Common myeloid progenitor, CD34-positive (primary cell): ENCODE measurements at regions of chr2 and their contacts with region 1.

Region 1: GRCh38 chr2:72579591-72580180 is 246.1 kb downstream of the EXOC6B start:
- DNase-seq: peak; percentile 50 to 73 (median 72)
- H3K4me3 ChIP-seq: no peak overlapping the region
- H3K27ac ChIP-seq: no peak overlapping the region
- H3K4me1 ChIP-seq: peaks cover 0 to 4% (median 4%) of the 10 kb centered on the region in 4 experiments
- H3K27me3 ChIP-seq: no peaks in the 10 kb centered on the region

Region 2: GRCh38 chr2:71923887-71924533 is 655.7 kb before region 1 on chr2:
- CTCF ChIA-PET with region 1: interaction called, 48 read pairs
- POLR2A ChIA-PET with region 1: no interaction called
- DNase-seq: peak; percentile 52 to 76 (median 70)
- H3K4me3 ChIP-seq: no peak overlapping the region
- H3K27ac ChIP-seq: no peak overlapping the region
- H3K4me1 ChIP-seq: no peaks in the 10 kb centered on the region
- H3K27me3 ChIP-seq: no peaks in the 10 kb centered on the region

Region 3: GRCh38 chr2:72649810-72650209 is 70.1 kb after region 1 on chr2:
- CTCF ChIA-PET with region 1: no interaction called
- POLR2A ChIA-PET with region 1: no interaction called
- DNase-seq: no peak
- H3K4me3 ChIP-seq: no peak overlapping the region
- H3K27ac ChIP-seq: no peak overlapping the region
- H3K4me1 ChIP-seq: no peaks in the 10 kb centered on the region
- H3K27me3 ChIP-seq: no peaks in the 10 kb centered on the region